Activated CD8-positive, alpha-beta T cell treated with anti-CD3 and anti-CD28 coated beads, Interleukin-2, amount 10 ng/mL, durations not matched to agents 7 days and 5 days (primary cell): ENCODE measurements at regions of chr1 and their contacts with region 1.

Region 1: DNA sequence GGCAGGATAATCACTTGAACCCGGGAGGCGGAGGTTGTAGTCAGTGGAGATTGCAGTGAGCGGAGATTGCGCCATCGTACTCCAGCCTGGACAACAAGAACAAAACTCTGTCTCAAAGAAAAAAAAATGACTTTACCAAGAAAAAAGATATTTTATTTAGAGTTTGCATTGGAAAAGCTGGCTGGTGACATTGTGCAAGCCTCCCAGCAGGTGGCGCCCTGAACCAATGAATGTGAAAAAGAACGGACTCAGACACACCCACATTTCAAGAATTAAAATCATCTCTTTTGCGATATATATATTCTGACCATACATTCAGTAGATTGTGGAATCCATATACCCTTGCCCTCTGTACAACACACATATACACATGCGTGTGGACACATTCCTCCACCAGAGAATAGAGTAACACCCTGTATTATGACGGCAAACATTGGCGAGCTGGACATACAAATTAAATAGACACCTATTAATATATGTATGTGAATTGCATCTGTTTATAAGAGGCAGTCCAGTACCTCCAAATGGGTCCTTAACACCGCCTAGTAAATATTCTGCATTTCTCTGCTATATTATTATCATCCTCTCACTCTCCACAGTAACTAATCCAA is 39.0 kb upstream of the CADM3 start:
- DNase-seq: peak; percentile 74
- ATAC-seq: no peak
- H3K4me3 Mint-ChIP-seq: no peak overlapping the region
- H3K27ac Mint-ChIP-seq: no peak overlapping the region
- H3K4me1 Mint-ChIP-seq: no peaks in the 10 kb centered on the region
- H3K27me3 Mint-ChIP-seq: peaks cover 4% of the 10 kb centered on the region

Region 2: GRCh38 chr1:159197561-159198557 is 65.5 kb after region 1 on chr1:
- CTCF ChIA-PET with region 1: interaction called, 20 read pairs
- POLR2A ChIA-PET with region 1: interaction called, 3 read pairs
- DNase-seq: peak; percentile 63
- ATAC-seq: peak; percentile 78
- H3K4me3 Mint-ChIP-seq: no peak overlapping the region
- H3K27ac Mint-ChIP-seq: no peak overlapping the region
- H3K4me1 Mint-ChIP-seq: peaks cover 10% of the 10 kb centered on the region
- H3K27me3 Mint-ChIP-seq: peaks cover 20% of the 10 kb centered on the region

Region 3: GRCh38 chr1:159338018-159338417 is 205.6 kb after region 1 on chr1:
- CTCF ChIA-PET with region 1: no interaction called
- POLR2A ChIA-PET with region 1: no interaction called
- DNase-seq: no peak
- ATAC-seq: no peak
- H3K4me3 Mint-ChIP-seq: no peak overlapping the region
- H3K27ac Mint-ChIP-seq: no peak overlapping the region
- H3K4me1 Mint-ChIP-seq: no peaks in the 10 kb centered on the region
- H3K27me3 Mint-ChIP-seq: no peaks in the 10 kb centered on the region